Caco-2 (cell line): ENCODE measurements at regions of chr5 and their contacts with region 1.

Region 1: DNA sequence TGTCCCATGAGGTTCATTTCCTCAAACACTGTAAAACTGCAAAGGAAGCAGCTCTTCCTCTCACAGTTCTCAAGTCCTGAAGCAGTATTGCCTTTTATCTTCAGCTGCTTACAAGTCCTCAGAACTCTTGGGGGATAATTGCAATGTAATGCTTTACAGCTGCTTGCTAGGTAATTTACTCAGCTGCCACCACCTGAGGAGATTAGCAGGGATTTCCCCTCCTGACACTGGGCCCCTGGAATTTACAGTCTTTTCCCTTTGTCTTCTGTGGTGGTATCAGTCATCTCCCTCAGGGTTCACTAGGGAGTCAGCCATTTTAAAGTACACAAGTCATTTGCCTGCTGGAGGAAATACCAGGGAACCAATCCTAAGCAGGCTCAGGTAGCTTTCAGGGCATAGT is 754.3 kb upstream of the GRAMD2B start:
- DNase-seq: peak; percentile 84 to 91
- H3K4me3 ChIP-seq: no peak overlapping the region
- H3K4me3 Mint-ChIP-seq: no peak overlapping the region
- H3K27ac Mint-ChIP-seq: peak overlapping the region; percentile 79
- H3K4me1 ChIP-seq: peaks cover 25% of the 10 kb centered on the region
- H3K4me1 Mint-ChIP-seq: peaks cover 16% of the 10 kb centered on the region
- H3K27me3 ChIP-seq: no peaks in the 10 kb centered on the region
- H3K27me3 Mint-ChIP-seq: no peaks in the 10 kb centered on the region
- CTCF ChIP-seq: no peak

Region 2: DNA sequence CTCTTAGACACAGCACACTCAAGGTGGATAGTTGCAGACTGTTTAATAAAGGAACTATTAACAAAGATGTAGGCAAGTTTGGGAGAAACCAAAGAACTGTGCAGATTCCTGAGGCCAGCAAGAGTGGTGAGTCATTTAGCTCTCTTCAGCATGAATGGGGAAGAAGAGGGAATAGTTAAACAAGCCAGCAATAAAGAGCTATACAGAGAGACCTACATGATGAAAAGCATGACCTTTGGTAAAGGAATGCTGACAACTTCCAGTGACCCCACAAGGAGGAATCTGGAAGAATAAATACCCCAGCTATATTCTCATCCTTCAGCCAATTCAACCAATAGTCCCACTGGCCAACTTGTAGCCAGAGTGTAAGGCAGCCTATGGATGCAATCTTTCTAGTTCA is 48.3 kb after region 1 on chr5:
- CTCF ChIA-PET with region 1: no interaction called
- POLR2A ChIA-PET with region 1: no interaction called
- intact Hi-C with region 1: loop called (anchors 1 kb)
- DNase-seq: peak; percentile 37 to 56
- H3K4me3 ChIP-seq: no peak overlapping the region
- H3K4me3 Mint-ChIP-seq: peak overlapping the region; percentile 56
- H3K27ac Mint-ChIP-seq: peak overlapping the region; percentile 24
- H3K4me1 ChIP-seq: peaks cover 42% of the 10 kb centered on the region
- H3K4me1 Mint-ChIP-seq: peaks cover 23% of the 10 kb centered on the region
- H3K27me3 ChIP-seq: no peaks in the 10 kb centered on the region
- H3K27me3 Mint-ChIP-seq: no peaks in the 10 kb centered on the region
- CTCF ChIP-seq: no peak